ENCODE measurements at regions of chr3 and their contacts with region 1.

Region 1: DNA sequence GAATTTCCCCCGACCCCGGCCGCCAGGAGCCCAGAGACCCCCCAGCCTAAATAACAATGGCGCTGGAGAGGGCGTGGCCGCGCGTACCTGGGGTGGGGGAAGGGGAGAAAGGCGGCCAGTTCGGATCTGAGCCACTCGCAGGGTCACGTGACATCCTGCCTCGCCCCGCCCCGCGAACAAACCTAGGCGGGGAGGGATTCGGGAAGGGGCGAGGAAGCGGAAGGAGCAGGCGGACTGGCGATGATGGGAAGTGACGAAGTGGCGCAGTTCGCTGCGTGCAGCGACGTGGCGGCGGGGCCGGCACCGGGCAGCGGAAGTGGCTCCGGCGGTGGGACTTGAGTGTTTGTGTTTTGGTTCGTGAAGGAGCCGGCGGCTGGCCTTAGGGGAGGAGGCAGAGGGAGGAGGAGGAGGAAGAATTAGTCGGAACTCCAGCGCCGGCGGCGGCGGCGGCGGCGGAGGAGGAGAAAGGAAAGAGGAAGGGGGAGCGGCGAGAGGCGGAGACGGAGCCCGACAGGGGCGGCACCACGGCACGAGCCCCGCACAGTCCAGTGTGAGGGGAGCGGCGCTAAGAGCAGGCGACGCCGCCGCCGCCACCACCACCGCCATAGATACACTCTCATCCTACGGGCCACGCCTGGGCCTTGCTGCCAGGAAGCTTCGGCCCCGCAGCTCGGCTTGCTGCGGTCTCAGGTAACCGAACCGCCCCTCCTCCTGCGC is at the start of gene RAB5A:
- DNase-seq: peak; percentile 99
- H3K4me3 Mint-ChIP-seq: peak within 1 kb of the TSS; percentile 95
- H3K27ac Mint-ChIP-seq: peak within 1 kb of the TSS; percentile 99
- H3K4me1 Mint-ChIP-seq: peaks cover 30% of the 10 kb centered on the region
- H3K27me3 Mint-ChIP-seq: peaks cover 3% of the 10 kb centered on the region
- total RNA-seq, gene RAB5A: 58.7 and 60.5 TPM in 2 replicates

Region 2: DNA sequence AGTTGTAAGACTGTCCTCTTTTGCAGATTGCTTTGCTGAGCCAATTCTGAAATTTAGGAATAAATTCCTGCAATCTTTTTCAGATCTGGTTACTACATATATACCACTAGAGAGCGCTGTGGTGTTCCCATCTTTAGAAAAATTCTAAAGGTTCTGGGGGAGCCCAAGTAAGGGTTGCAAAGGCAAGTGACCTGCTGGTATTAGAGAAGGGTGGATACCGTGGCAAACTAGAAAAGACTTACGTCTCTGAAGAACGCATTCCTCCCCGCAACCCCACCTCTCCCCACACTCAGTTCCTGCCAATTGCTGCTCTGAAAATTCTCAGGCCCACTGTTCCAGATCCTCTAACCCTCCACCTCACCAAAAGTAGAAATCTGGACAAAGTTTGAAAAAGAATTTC is 61.5 kb before region 1 on chr3:
- intact Hi-C with region 1: loop called (anchors 2 kb)
- DNase-seq: peak; percentile 63
- H3K4me3 Mint-ChIP-seq: no peak overlapping the region
- H3K27ac Mint-ChIP-seq: no peak overlapping the region
- H3K4me1 Mint-ChIP-seq: peaks cover 6% of the 10 kb centered on the region
- H3K27me3 Mint-ChIP-seq: no peaks in the 10 kb centered on the region

Region 3: DNA sequence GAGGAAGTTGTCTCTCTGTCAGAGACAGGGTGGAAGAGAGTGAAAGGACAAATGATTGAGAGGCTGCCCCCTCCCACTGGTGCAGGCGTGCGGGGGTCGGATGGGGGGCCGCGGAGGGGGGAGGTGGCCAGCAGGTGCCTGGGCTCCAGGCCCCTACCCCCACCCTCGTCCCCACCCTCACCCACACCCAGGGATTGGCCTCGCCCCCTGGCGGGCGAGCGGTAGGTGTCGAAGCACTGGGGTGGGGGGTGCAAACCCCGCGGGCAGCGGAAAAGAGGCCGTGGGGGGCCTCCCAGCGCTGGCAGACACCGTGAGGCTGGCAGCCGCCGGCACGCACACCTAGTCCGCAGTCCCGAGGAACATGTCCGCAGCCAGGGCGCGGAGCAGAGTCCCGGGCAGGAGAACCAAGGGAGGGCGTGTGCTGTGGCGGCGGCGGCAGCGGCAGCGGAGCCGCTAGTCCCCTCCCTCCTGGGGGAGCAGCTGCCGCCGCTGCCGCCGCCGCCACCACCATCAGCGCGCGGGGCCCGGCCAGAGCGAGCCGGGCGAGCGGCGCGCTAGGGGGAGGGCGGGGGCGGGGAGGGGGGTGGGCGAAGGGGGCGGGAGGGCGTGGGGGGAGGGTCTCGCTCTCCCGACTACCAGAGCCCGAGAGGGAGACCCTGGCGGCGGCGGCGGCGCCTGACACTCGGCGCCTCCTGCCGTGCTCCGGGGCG is 92.9 kb after region 1 on chr3 and contains the start of gene KAT2B:
- intact Hi-C with region 1: loop called (anchors 1 kb)
- DNase-seq: peak; percentile 94
- H3K4me3 Mint-ChIP-seq: peak within 1 kb of the TSS; percentile 96
- H3K27ac Mint-ChIP-seq: peak within 1 kb of the TSS; percentile 98
- H3K4me1 Mint-ChIP-seq: peaks cover 49% of the 10 kb centered on the region
- H3K27me3 Mint-ChIP-seq: no peaks in the 10 kb centered on the region
- total RNA-seq, gene KAT2B: 23.3 and 27.9 TPM in 2 replicates

Region 4: GRCh38 chr3:20054549-20054987 is 107.6 kb after region 1 on chr3:
- intact Hi-C with region 1: loop called (anchors 1 kb)
- DNase-seq: peak; percentile 84
- H3K4me3 Mint-ChIP-seq: no peak overlapping the region
- H3K27ac Mint-ChIP-seq: no peak overlapping the region
- H3K4me1 Mint-ChIP-seq: peaks cover 30% of the 10 kb centered on the region
- H3K27me3 Mint-ChIP-seq: no peaks in the 10 kb centered on the region

Region 5: DNA sequence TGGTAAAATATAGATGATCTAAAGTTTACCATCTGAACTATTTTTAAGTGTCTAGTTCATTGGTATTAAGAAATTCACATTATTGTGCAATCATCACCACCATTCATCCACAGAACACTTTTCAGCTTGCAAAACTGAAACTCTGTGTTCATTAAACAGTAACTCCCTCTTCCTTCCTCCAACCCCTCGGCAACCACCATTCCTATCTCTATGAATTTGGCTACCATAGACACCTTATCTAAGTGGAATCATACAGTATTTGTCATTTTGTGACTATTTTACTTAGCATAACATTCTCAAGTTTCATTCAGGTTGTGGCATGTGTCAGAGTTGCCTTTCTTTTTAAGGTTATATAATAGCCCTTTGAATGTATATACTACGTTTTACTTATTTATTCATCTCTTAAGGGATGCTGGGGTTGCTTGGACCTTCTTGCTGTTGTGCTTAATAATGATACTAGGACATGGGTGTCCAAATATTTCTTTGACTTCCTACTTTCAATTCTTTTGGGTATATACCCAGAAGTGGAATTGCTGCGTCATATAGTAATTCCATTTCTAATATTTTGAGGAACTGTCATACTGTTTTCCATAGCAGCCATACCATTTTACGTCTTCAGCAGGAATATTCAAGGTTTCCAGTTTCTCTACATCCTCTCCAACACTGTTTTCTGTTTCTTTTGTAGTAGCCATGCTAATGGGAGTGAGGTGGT is 114.1 kb after region 1 on chr3:
- intact Hi-C with region 1: loop called (anchors 1 kb)
- DNase-seq: peak; percentile 68
- H3K4me3 Mint-ChIP-seq: peak overlapping the region; percentile 52
- H3K27ac Mint-ChIP-seq: peak overlapping the region; percentile 69
- H3K4me1 Mint-ChIP-seq: peaks cover 37% of the 10 kb centered on the region
- H3K27me3 Mint-ChIP-seq: no peaks in the 10 kb centered on the region

Region 6: GRCh38 chr3:20104167-20104661 is 157.2 kb after region 1 on chr3:
- intact Hi-C with region 1: loop called (anchors 5 kb)
- DNase-seq: peak; percentile 86
- H3K4me3 Mint-ChIP-seq: peak overlapping the region; percentile 67
- H3K27ac Mint-ChIP-seq: peak overlapping the region; percentile 86
- H3K4me1 Mint-ChIP-seq: peaks cover 57% of the 10 kb centered on the region
- H3K27me3 Mint-ChIP-seq: no peaks in the 10 kb centered on the region

Region 7: DNA sequence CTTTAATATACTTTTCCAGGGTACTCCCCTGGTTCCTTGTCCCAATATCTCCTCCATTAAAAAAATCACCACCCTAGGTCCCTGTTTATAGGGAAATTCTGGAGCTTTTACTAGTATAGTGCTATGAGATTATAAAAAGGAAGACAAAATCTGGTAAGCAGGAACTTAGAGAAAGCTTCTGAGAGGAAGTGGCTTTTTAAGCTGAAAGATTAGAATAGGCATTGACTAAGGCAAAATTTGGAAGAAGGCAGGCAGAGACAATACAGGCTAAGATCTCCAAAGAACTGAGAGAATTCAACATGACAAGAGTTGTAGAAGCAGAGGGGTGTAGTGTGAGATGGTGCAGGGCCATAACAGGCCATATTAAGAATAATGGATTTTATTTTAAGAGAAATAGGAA is 213.2 kb after region 1 on chr3:
- intact Hi-C with region 1: no loop called
- DNase-seq: no peak
- H3K4me3 Mint-ChIP-seq: peak overlapping the region; percentile 3
- H3K27ac Mint-ChIP-seq: peak overlapping the region; percentile 54
- H3K4me1 Mint-ChIP-seq: peaks cover 23% of the 10 kb centered on the region
- H3K27me3 Mint-ChIP-seq: no peaks in the 10 kb centered on the region

Measured in activated CD4-positive, alpha-beta T cell treated with anti-CD3 and anti-CD28 coated beads, Interleukin-2, amount 10 ng/mL, durations not matched to agents 24 days and 14 days (primary cell).